B cell (primary cell): ENCODE measurements at regions of chr1 and their contacts with region 1.

Region 1: DNA sequence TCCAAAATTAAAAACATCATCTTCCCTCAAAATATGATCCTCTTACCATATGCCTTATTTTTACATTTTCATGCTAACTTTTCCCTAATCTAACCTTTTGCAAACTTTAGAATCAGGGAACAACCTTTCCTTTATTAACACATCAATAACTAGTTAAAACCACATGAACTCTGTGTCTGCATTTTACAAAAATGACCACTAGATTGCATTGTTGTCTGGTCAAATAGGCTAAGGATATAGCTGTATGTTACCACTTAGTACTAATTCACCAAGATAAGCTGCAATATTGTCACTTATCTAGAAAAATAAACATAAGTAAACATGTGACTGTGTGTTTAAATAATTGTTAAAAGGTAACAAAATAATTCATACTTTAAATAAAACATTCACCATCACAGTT is 82.3 kb downstream of the DENND1B start:
- DNase-seq: peak; percentile 13
- ATAC-seq: no peak
- H3K4me3 ChIP-seq: no peak overlapping the region
- H3K4me3 Mint-ChIP-seq: no peak overlapping the region
- H3K27ac ChIP-seq: no peak overlapping the region
- H3K27ac Mint-ChIP-seq: no peak overlapping the region
- H3K4me1 ChIP-seq: peaks cover 0 to 3% of the 10 kb centered on the region in 2 donors
- H3K4me1 Mint-ChIP-seq: peaks cover 28% of the 10 kb centered on the region
- H3K27me3 ChIP-seq: no peaks in the 10 kb centered on the region
- H3K27me3 Mint-ChIP-seq: no peaks in the 10 kb centered on the region
- CTCF ChIP-seq: no peak

Region 2: GRCh38 chr1:197572169-197572568 is 120.8 kb before region 1 on chr1:
- CTCF ChIA-PET with region 1: no interaction called
- POLR2A ChIA-PET with region 1: no interaction called
- intact Hi-C with region 1: no loop called
- DNase-seq: no peak
- ATAC-seq: no peak
- H3K4me3 ChIP-seq: no peak overlapping the region
- H3K4me3 Mint-ChIP-seq: no peak overlapping the region
- H3K27ac ChIP-seq: no peak overlapping the region
- H3K27ac Mint-ChIP-seq: no peak overlapping the region
- H3K4me1 ChIP-seq: no peaks in the 10 kb centered on the region
- H3K4me1 Mint-ChIP-seq: no peaks in the 10 kb centered on the region
- H3K27me3 ChIP-seq: no peaks in the 10 kb centered on the region
- H3K27me3 Mint-ChIP-seq: no peaks in the 10 kb centered on the region
- CTCF ChIP-seq: no peak

Region 3: DNA sequence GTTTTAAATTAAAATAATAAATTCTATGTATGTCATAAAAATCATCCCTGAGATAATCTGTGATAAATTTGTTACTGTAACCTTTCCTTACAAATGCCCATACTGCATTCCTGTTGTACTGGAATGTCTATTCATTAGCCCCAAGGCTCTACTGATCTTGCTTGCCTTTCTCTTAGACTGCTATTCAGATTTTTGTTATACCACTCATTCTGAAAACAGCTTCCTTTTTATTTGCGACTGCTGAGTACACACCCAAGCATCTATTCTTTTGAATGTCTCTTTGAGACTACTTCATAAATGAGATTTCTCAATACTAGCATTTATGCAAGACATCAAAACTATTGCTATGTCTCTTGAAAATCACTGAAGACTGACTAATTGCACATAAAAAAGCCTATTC is 43.7 kb after region 1 on chr1:
- CTCF ChIA-PET with region 1: interaction called, 3 read pairs
- POLR2A ChIA-PET with region 1: no interaction called
- intact Hi-C with region 1: loop called (anchors 5 kb)
- DNase-seq: no peak
- ATAC-seq: no peak
- H3K4me3 ChIP-seq: no peak overlapping the region
- H3K4me3 Mint-ChIP-seq: no peak overlapping the region
- H3K27ac ChIP-seq: no peak overlapping the region
- H3K27ac Mint-ChIP-seq: no peak overlapping the region
- H3K4me1 ChIP-seq: no peaks in the 10 kb centered on the region
- H3K4me1 Mint-ChIP-seq: peaks cover 30% of the 10 kb centered on the region
- H3K27me3 ChIP-seq: no peaks in the 10 kb centered on the region
- H3K27me3 Mint-ChIP-seq: no peaks in the 10 kb centered on the region
- CTCF ChIP-seq: no peak